ENCODE measurements at regions of chr3 and their contacts with region 1.

Region 1: DNA sequence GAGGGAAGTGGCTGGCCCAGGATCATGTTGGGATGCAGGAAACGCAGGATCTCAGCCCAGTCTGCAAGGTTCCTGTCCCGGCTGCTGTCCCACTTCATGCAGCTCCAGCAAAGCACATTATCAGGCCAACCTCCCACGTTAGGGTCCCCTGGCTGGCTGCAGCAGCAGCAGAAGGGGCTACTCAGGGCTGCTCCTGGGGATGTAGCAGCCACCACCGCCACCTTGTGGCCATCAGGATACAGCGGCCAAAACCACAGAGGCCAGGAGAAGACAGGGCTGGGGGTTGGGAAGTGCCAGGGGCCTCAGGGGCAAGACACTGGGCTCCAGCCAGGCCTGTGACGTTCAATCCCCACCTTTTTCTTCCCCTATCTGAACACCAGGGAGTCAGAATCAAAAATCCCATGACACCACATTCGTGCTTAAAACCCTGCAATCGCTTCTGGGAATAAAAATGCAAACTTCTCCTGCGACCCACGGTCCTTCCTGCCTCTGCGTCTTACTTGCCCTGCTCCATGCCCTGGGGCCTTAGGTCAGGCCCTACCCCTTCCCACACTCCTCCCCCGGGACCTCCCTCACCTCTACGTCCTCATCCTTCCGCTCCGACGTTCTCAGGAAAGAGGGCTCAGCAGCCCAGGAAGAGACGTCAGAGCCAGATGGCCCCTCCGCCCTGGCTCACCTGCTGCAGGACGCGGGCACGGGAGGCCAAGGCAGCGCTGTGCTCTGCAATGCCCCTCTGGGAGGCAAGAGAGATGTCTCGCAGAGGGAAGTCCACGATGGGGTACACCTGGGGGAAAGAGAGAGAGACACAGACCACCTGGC is 21.5 kb downstream of the SSUH2 start:
- DNase-seq: peak; percentile 15
- H3K4me3 Mint-ChIP-seq: no peak overlapping the region
- H3K27ac Mint-ChIP-seq: no peak overlapping the region
- H3K4me1 Mint-ChIP-seq: peaks cover 11% of the 10 kb centered on the region
- H3K27me3 Mint-ChIP-seq: peaks cover 5% of the 10 kb centered on the region

Region 2: DNA sequence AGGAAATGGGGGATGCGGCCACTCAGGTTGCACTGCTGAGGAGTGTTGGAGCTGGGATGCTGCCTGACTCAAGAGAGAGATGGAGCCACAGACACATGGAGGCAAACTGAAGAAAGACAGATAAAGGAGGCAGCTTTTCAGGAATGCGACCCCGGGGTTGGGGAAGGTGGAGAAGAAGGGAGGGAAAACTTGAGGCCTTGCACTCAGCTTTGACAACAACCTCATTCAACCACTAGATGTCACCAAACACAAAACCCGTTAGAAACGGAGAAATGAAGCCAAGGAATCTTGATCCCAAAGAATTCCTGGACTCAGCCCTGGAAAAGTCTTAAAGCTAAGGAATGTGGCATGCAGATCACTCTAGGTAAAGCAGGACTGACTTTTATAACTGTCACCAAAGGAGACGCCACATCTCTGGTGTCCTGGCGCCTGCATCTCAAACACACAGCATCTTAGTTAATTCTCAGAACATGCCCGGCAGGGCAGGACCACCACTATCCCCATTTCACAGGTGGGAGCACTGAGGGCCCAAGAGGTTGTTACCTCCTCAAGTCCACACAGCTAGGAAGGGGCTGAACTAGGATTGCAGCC is 181.0 kb before region 1 on chr3:
- intact Hi-C with region 1: loop called (anchors 5 kb)
- DNase-seq: no peak
- H3K4me3 Mint-ChIP-seq: no peak overlapping the region
- H3K27ac Mint-ChIP-seq: no peak overlapping the region
- H3K4me1 Mint-ChIP-seq: no peaks in the 10 kb centered on the region
- H3K27me3 Mint-ChIP-seq: peaks cover 5% of the 10 kb centered on the region

Region 3: GRCh38 chr3:8899986-8900385 is 276.9 kb after region 1 on chr3:
- intact Hi-C with region 1: no loop called
- DNase-seq: no peak
- H3K4me3 Mint-ChIP-seq: no peak overlapping the region
- H3K27ac Mint-ChIP-seq: no peak overlapping the region
- H3K4me1 Mint-ChIP-seq: no peaks in the 10 kb centered on the region
- H3K27me3 Mint-ChIP-seq: no peaks in the 10 kb centered on the region